ENCODE measurements at regions of chrX and their contacts with region 1.

Region 1: GRCh38 chrX:69117876-69118526 is 47.3 kb downstream of the PJA1 start:
- DNase-seq: no peak
- H3K4me3 ChIP-seq: no peak overlapping the region
- H3K27ac ChIP-seq: no peak overlapping the region
- H3K4me1 ChIP-seq: no peaks in the 10 kb centered on the region
- H3K27me3 ChIP-seq: no peaks in the 10 kb centered on the region
- CTCF ChIP-seq: no peak
- POLR2A ChIP-seq: no peak

Region 2: DNA sequence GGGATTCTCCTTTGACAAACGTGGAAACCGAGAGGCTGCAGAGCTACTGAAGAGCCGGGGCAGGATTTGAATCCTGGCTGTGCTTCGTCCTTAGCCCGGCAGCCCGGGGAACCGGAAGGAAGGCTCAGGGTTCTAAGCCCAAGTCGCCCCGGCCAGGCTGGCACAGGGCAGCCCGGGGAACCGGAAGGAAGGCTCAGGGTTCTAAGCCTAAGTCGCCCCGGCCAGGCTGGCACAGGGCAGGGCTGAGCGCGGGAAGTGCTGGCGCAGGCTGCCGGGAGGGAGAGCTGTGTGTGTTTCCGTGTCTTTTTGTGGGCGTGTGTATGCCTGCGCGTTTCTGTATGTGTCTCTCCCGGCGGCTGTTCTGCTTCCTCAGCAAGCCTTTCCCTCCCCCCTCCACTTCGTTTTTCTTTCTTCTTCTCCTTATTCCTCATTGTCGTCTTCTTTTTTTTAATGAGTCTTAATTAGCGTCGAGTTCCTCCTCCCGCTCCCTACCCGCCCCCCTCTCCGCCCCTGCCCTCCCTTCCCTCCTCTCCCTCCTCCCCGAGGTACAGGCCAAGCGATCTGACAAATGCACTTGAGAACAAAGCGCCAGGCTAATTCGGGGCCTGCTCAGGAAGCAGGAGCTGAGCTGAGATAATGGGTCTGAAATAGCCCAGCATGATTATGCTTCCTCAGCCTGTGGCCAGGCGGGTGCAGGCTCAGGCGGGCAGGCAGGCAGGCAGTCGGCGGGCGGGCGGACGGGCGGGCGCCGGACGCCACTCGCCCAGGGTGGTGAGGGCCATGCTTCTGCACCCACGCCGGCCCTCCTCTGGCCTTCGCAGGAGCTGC is 223.3 kb before region 1 on chrX:
- intact Hi-C with region 1: no loop called
- DNase-seq: no peak
- H3K4me3 ChIP-seq: peak overlapping the region; percentile 15 to 20
- H3K27ac ChIP-seq: peak overlapping the region; percentile 74
- H3K4me1 ChIP-seq: peaks cover 24% of the 10 kb centered on the region
- H3K27me3 ChIP-seq: no peaks in the 10 kb centered on the region
- CTCF ChIP-seq: no peak
- POLR2A ChIP-seq: no peak

Region 3: GRCh38 chrX:69179380-69179911 is 61.4 kb after region 1 on chrX:
- intact Hi-C with region 1: no loop called
- DNase-seq: peak in 1 of 2 donors; percentile 70
- H3K4me3 ChIP-seq: no peak overlapping the region
- H3K27ac ChIP-seq: no peak overlapping the region
- H3K4me1 ChIP-seq: no peaks in the 10 kb centered on the region
- H3K27me3 ChIP-seq: no peaks in the 10 kb centered on the region
- CTCF ChIP-seq: no peak
- POLR2A ChIP-seq: no peak

Region 4: GRCh38 chrX:69262036-69262936 is 144.3 kb after region 1 on chrX:
- intact Hi-C with region 1: loop called (anchors 2 kb)
- DNase-seq: no peak
- H3K4me3 ChIP-seq: no peak overlapping the region
- H3K27ac ChIP-seq: no peak overlapping the region
- H3K4me1 ChIP-seq: no peaks in the 10 kb centered on the region
- H3K27me3 ChIP-seq: no peaks in the 10 kb centered on the region
- CTCF ChIP-seq: no peak
- POLR2A ChIP-seq: no peak

Region 5: DNA sequence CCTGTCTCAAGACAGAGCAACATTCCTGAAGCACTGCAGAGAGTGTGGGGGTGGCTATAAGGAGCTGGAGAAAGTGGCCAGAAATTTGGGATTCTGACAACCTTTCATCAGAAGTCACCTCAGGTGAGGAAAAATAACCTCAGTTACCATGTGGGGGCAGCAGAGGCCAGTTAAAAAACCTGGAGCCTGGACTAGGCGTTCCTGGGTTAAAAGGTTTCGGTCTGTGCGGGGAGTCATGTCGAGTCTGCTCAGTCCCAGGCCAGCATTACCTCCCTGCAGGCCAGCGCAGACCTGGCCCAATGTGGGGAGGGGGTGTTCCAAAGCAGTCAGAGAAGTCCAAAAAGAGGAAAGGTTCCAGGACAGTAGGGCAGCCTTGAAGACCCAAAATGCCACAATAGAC is 375.2 kb after region 1 on chrX:
- intact Hi-C with region 1: no loop called
- DNase-seq: peak in 1 of 2 donors; percentile 58
- H3K4me3 ChIP-seq: no peak overlapping the region
- H3K27ac ChIP-seq: no peak overlapping the region
- H3K4me1 ChIP-seq: no peaks in the 10 kb centered on the region
- H3K27me3 ChIP-seq: no peaks in the 10 kb centered on the region
- CTCF ChIP-seq: no peak
- POLR2A ChIP-seq: no peak

Region 6: DNA sequence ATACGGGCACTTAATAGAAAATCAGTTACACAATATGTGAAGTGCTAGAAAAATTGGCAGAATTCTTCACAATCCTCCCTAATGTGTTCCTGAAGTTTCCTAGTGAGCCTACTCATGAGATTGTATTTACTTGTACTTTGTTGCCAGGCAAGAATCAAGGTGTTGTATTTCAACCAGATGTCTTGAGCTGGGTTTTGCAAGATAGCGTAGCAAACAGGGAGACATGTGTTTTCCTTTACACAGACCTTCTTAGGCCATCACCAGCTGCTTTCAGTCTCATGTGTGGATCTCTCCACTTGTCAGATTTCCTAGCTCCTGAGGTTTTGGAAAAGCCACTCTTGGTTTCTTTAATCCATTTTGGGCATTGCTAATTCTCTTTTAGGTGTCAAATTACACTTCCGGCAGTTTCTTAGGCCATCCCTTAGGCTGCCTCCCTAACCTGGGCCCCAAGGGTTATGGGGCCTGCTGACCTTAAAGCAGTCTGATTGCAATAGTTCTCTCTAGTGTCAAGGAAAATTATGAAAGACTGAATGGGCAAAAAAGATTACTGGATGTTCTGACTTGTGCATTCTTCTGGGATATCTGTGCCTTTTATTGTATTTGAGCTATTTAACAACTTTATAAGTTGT is 485.7 kb after region 1 on chrX:
- intact Hi-C with region 1: no loop called
- DNase-seq: no peak
- H3K4me3 ChIP-seq: no peak overlapping the region
- H3K27ac ChIP-seq: no peak overlapping the region
- H3K4me1 ChIP-seq: no peaks in the 10 kb centered on the region
- H3K27me3 ChIP-seq: no peaks in the 10 kb centered on the region
- CTCF ChIP-seq: no peak
- POLR2A ChIP-seq: no peak

Measured in vagina (tissue), 2 donors.